ENCODE measurements at regions of chr6 and their contacts with region 1.

Region 1: GRCh38 chr6:31739639-31740396 is at the start of gene MSH5:
- H3K4me3 ChIP-seq: peak within 1 kb of the TSS; percentile 61
- H3K27ac ChIP-seq: peak within 1 kb of the TSS; percentile 87
- H3K4me1 ChIP-seq: peaks cover 29% of the 10 kb centered on the region
- CTCF ChIP-seq: no peak

Region 2: GRCh38 chr6:31186052-31186734 is 553.6 kb before region 1 on chr6:
- CTCF ChIA-PET with region 1: no interaction called
- POLR2A ChIA-PET with region 1: no interaction called
- H3K4me3 ChIP-seq: no peak overlapping the region
- H3K27ac ChIP-seq: no peak overlapping the region
- H3K4me1 ChIP-seq: peaks cover 3% of the 10 kb centered on the region; the same call in 1 of the 2 replicates
- CTCF ChIP-seq: no peak

Region 3: DNA sequence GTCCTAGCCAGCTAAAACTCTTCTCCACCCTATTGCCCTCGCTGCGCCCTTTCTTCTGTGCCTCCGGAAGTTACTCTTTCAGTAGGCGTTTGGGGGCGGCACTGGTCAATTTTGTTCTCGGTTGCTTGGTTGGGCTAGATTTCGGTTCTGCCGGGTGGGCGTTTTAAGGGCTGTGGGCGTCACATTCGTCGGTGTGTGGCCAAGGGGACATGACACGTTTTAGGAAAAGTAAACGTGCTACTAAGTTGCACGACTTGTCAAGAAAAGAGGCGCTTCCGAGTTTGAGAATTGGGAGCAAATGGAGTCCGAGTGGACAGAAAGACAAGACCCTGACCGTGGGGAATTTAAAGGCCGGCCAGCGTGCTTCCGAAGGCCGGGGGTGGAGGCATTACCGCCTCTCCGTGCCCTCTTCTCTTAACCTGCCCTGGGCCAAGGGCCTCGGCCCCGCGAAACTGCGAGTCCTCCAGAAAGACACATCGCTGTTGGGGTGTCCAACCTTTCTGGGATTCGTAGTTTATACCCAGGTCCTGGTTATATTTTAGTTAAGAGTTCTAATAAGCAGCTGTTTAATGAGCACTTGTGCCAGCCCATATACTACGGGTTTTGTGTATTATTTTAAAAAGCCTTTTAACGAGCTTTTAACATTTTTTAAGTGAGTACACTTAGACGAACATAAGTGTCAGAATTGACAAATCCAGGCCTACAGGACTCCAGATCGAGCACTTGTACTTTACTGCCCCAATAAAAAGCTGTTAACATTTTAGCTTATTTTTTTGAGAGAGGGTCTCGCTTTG is 86.7 kb before region 1 on chr6:
- CTCF ChIA-PET with region 1: no interaction called
- POLR2A ChIA-PET with region 1: interaction called, 11 read pairs
- H3K4me3 ChIP-seq: peak overlapping the region; percentile 85
- H3K27ac ChIP-seq: peak overlapping the region; percentile 87
- H3K4me1 ChIP-seq: 0 out of 2 replicates have a peak, but pooled peaks cover 6% of the 10 kb centered on the region
- CTCF ChIP-seq: peak; percentile 35; the same call in 1 of the 2 replicates

Region 4: GRCh38 chr6:31665501-31666336 is 74.1 kb before region 1 on chr6 and contains the start of gene CSNK2B:
- CTCF ChIA-PET with region 1: interaction called, 4 read pairs
- POLR2A ChIA-PET with region 1: interaction called, 12 read pairs
- H3K4me3 ChIP-seq: peak within 1 kb of the TSS; percentile 92
- H3K27ac ChIP-seq: peak within 1 kb of the TSS; percentile 92
- H3K4me1 ChIP-seq: peaks cover 6% of the 10 kb centered on the region; the same call in 1 of the 2 replicates
- CTCF ChIP-seq: peak; percentile 75

Region 5: DNA sequence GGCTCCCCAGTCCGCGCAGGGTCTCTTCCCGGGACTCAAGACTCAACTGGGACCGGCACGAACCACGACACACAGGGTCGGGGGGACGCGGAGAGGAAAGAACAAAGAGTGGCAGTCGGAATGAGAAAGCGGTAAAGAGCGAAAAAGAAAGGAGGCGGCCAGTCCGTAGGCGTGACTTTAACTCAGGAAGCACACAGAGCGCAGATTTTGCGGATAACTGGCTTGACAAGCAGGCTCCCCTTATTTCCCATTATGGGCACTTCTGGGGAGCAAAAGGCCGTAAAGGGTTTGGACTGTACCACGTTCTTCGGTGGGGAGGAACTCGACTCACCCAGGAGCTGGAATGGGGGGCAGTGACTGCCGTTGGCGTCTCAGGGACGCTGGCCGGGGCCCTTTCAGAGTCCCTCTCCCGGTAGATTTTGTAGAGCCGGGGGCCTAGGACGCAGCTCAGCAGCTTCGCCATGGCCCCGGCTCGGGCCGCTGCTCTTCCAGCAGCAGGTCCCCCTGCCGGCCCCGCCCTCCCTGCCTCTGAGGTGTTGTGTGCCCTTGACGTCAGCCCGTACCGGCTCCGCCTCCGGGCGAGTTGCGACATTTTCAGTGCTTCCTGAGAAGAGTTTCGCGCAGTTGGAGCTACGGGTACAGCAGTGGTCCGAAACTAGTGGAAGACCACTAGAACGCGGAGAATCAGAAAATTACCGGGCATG is 36.8 kb before region 1 on chr6 and contains the start of gene ABHD16A:
- CTCF ChIA-PET with region 1: no interaction called
- POLR2A ChIA-PET with region 1: interaction called, 10 read pairs
- H3K4me3 ChIP-seq: peak within 1 kb of the TSS; percentile 63
- H3K27ac ChIP-seq: peak within 1 kb of the TSS; percentile 62
- H3K4me1 ChIP-seq: no peaks in the 10 kb centered on the region
- CTCF ChIP-seq: 0 out of 2 replicates have a peak, but pooled peaks have one; percentile 9

Region 6: GRCh38 chr6:31729515-31729978 is 10.3 kb before region 1 on chr6:
- CTCF ChIA-PET with region 1: interaction called, 13 read pairs
- POLR2A ChIA-PET with region 1: interaction called, 52 read pairs
- H3K4me3 ChIP-seq: peak overlapping the region; percentile 74
- H3K27ac ChIP-seq: peak overlapping the region; percentile 67; the same call in 1 of the 2 replicates
- H3K4me1 ChIP-seq: peaks cover 3% of the 10 kb centered on the region
- CTCF ChIP-seq: peak; percentile 94

Region 7: GRCh38 chr6:31752739-31753319 is 13.0 kb after region 1 on chr6:
- CTCF ChIA-PET with region 1: interaction called, 5 read pairs
- POLR2A ChIA-PET with region 1: interaction called, 43 read pairs
- H3K4me3 ChIP-seq: no peak overlapping the region
- H3K27ac ChIP-seq: no peak overlapping the region
- H3K4me1 ChIP-seq: no peaks in the 10 kb centered on the region
- CTCF ChIP-seq: no peak